Activated CD4-positive, alpha-beta T cell treated with anti-CD3 and anti-CD28 coated beads, Interleukin-2, amount 10 ng/mL, durations not matched to agents 24 days and 14 days (primary cell): ENCODE measurements at regions of chr2 and their contacts with region 1.

Region 1: GRCh38 chr2:946073-946948 is 4.3 kb upstream of the SNTG2 start:
- DNase-seq: no peak
- H3K4me3 Mint-ChIP-seq: peak overlapping the region; percentile 6
- H3K27ac Mint-ChIP-seq: peak overlapping the region; percentile 2
- H3K4me1 Mint-ChIP-seq: peaks cover 16% of the 10 kb centered on the region
- H3K27me3 Mint-ChIP-seq: peaks cover 16% of the 10 kb centered on the region

Region 2: DNA sequence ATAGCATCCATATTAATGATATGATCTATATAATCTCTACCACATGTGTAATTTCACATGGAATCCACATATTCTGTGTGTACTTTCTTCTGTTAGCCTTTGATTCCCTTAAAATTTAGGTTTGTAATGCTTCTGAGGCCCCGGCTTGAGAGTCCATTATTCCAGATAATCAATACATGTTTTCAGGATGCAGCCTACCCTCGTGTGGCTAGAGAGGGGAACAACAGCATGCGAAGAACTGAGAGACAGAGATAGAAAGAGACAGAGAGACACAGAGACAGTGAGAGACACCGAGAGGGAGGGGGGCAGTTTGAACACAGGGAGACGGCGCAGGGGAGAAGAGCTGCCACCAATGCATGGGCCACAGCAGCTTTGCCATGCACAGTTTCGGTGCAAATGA is 189.7 kb after region 1 on chr2:
- intact Hi-C with region 1: loop called (anchors 10 kb)
- DNase-seq: no peak
- H3K4me3 Mint-ChIP-seq: peak overlapping the region; percentile 5
- H3K27ac Mint-ChIP-seq: peak overlapping the region; percentile 2
- H3K4me1 Mint-ChIP-seq: peaks cover 21% of the 10 kb centered on the region
- H3K27me3 Mint-ChIP-seq: peaks cover 2% of the 10 kb centered on the region